Heart right ventricle (tissue), 16 donors: ENCODE measurements at regions of chr2 and their contacts with region 1.

Region 1: DNA sequence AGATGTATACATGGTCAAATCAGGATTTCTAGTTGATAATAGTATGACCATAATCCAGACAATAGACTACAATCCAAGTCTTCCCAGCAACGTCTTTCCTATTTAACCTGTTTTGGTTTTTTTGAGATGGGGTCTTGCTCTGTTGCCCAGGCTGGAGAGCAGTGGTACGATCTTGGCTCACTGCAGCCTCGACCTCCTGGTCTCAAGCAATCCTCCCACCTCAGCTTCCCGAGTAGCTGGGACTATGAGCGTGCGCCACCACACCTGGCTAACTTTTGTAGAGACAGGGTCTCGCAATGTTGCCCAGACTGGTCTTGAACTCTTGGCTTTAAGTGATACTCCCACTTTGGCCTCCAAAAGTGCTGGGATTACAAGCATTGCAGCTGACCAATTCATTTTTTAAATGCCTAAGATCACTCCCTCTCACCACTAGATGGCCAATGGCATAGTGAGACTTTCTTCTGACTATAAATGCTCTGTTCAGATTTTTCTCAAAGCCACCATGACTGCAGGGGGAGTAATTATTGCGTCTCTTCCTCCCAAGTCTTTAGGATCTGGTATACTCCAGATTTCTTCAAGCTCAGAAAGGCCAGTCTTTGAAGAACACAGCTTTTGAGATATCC is 47.6 kb downstream of the HNRNPLL start:
- DNase-seq: no peak
- ATAC-seq: no peak
- H3K4me3 ChIP-seq: no peak overlapping the region
- H3K27ac ChIP-seq: no peak overlapping the region
- H3K4me1 ChIP-seq: peaks cover 0 to 20% (median 0%) of the 10 kb centered on the region in 9 donors
- H3K27me3 ChIP-seq: no peaks in the 10 kb centered on the region
- CTCF ChIP-seq: peak in 6 of 9 donors; percentile 13 to 33 (median 26)

Region 2: GRCh38 chr2:39865751-39866150 is 1310.7 kb after region 1 on chr2:
- intact Hi-C with region 1: loop called in 1 of 10 experiments (anchors 5 kb)
- DNase-seq: no peak
- ATAC-seq: no peak
- H3K4me3 ChIP-seq: no peak overlapping the region
- H3K27ac ChIP-seq: no peak overlapping the region
- H3K4me1 ChIP-seq: peaks cover 0 to 10% (median 4%) of the 10 kb centered on the region in 9 donors
- H3K27me3 ChIP-seq: peaks cover 0 to 4% (median 0%) of the 10 kb centered on the region in 7 donors
- CTCF ChIP-seq: no peak